Aorta (tissue), 5 donors: ENCODE measurements at regions of chr11 and their contacts with region 1.

Region 1: GRCh38 chr11:67507864-67508485 is at the start of gene CDK2AP2:
- DNase-seq: peak; percentile 100
- ATAC-seq: peak; percentile 90
- H3K4me3 ChIP-seq: peak within 1 kb of the TSS; percentile 59 to 62
- H3K27ac ChIP-seq: peak within 1 kb of the TSS; percentile 65 to 96
- H3K4me1 ChIP-seq: no peaks in the 10 kb centered on the region
- H3K27me3 ChIP-seq: no peaks in the 10 kb centered on the region
- total RNA-seq, gene CDK2AP2: 40.8 to 65.6 TPM

Region 2: DNA sequence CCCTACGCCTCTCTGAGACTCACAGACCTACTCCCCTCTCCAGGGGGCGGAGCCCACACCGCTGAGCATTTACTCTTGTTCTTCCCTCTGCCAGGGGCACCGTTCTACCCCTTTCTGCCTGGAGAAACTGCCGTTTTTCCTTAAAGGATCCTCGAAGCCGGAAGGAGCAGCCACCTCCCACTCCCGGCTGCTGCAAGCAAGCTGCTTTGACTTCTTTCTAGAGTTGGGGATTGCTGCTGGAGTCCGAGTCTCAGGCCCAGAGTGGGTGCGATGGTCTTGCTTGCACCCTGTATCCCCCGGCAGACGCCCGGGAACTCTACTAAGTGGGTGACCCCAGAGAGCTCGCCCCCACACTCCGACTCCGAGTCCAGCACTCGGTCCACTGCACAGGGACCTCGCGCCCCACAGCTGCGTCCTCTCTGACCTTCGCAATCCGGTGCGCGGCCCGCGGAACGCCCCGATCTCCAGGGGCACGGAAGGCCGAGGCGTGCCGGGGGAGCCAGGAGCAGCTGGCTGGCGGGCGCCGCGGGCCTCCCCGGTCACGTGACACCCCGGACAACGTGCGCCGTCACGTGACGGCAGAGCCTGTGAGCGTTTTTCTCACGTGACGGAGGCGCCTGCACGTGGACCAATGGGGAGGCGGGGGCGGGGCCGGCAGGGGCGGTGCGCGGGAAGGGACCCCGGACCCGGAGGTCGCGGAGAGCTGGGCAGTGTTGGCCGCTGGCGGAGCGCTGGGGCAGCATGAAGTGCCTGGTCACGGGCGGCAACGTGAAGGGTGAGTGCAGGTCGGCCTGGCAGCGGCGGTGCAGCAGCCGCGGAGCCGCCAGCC is 116.5 kb before region 1 on chr11 and contains the start of gene RAD9A:
- intact Hi-C with region 1: loop called in 1 of 2 experiments (anchors 10 kb)
- DNase-seq: peak; percentile 97 to 98
- ATAC-seq: peak; percentile 94
- H3K4me3 ChIP-seq: peak within 1 kb of the TSS; percentile 50 to 83
- H3K27ac ChIP-seq: peak within 1 kb of the TSS in 1 of 2 donors; percentile 39
- H3K4me1 ChIP-seq: no peaks in the 10 kb centered on the region
- H3K27me3 ChIP-seq: no peaks in the 10 kb centered on the region
- total RNA-seq, gene RAD9A: 14.6 to 25.1 TPM

Region 3: DNA sequence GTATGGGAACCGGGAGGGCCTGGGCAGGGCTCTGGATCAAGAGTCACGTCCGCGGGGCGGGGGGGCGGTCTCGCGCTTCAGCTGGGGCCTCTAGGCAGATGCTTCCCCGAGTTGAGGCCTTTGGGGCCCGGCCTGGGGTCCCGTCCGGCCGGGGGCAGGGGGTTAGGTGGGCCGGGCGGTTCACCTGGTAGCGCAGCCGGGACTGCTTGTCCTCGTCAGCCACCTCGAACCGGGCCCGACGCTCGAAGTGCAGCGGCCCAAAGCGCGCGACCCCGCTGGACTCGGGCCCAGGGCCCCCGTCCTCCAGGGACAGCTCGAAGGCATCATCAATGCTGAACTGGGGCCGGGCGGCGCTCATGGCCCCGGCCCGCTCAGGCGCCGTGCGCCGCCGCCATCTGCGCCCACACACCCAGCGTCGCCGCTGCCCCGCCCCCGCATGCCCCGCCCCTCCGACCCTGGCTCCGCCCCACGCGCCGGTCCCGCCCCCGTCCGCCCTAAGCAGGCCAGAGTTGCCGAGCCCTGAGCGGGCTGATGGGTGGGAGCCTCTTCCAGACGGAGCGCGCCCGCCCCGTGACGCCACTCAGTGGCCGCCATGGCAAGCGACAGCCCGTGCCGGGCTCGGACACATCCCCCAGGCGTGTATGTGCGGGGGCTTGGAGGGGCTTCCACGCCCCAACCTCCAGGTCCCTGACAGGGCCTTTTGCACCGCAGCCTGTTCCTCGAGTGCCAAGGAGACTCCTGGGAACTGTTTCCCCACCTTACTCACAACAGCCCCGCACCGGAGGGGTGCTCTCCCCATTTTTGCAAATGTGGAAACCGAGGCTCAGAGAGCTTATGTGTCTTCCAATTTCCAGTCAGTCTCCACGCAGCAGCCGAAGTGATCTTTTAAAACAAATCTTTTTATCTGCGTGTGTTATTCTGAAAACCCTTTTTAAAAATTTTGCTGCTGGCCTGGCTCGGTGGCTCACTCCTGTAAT is 38.9 kb before region 1 on chr11 and contains the start of gene TMEM134:
- intact Hi-C with region 1: loop called in 1 of 2 experiments (anchors 5 kb)
- DNase-seq: peak; percentile 96 to 98
- ATAC-seq: peak; percentile 95
- H3K4me3 ChIP-seq: peak within 1 kb of the TSS; percentile 74 to 90
- H3K27ac ChIP-seq: peak within 1 kb of the TSS; percentile 29 to 46
- H3K4me1 ChIP-seq: no peaks in the 10 kb centered on the region
- H3K27me3 ChIP-seq: no peaks in the 10 kb centered on the region
- total RNA-seq, gene TMEM134: 34.1 to 37.6 TPM

Region 4: GRCh38 chr11:67563354-67564114 is 55.6 kb after region 1 on chr11:
- intact Hi-C with region 1: loop called (anchors 5 kb)
- DNase-seq: peak; percentile 67 to 82
- ATAC-seq: no peak
- H3K4me3 ChIP-seq: no peak overlapping the region
- H3K27ac ChIP-seq: peak overlapping the region in 1 of 2 donors; percentile 35
- H3K4me1 ChIP-seq: peaks cover 2 to 3% of the 10 kb centered on the region in 2 donors
- H3K27me3 ChIP-seq: no peaks in the 10 kb centered on the region